ENCODE measurements at regions of chr15 and their contacts with region 1.

Region 1: GRCh38 chr15:77633134-77633912 is 611 bp upstream of the LINGO1 start:
- DNase-seq: peak; percentile 98
- ATAC-seq: peak; percentile 63
- H3K4me3 Mint-ChIP-seq: peak overlapping the region; percentile 63
- H3K27ac Mint-ChIP-seq: peak overlapping the region; percentile 86
- H3K4me1 Mint-ChIP-seq: peaks cover 57% of the 10 kb centered on the region
- H3K27me3 Mint-ChIP-seq: peaks cover 7% of the 10 kb centered on the region
- CTCF ChIP-seq: peak; percentile 92

Region 2: GRCh38 chr15:77107531-77108355 is 525.6 kb before region 1 on chr15:
- CTCF ChIA-PET with region 1: interaction called, 10 read pairs
- POLR2A ChIA-PET with region 1: no interaction called
- DNase-seq: peak; percentile 79
- ATAC-seq: peak; percentile 94
- H3K4me3 Mint-ChIP-seq: no peak overlapping the region
- H3K27ac Mint-ChIP-seq: peak overlapping the region; percentile 95
- H3K4me1 Mint-ChIP-seq: peaks cover 10% of the 10 kb centered on the region
- H3K27me3 Mint-ChIP-seq: no peaks in the 10 kb centered on the region
- CTCF ChIP-seq: peak; percentile 59

Region 3: DNA sequence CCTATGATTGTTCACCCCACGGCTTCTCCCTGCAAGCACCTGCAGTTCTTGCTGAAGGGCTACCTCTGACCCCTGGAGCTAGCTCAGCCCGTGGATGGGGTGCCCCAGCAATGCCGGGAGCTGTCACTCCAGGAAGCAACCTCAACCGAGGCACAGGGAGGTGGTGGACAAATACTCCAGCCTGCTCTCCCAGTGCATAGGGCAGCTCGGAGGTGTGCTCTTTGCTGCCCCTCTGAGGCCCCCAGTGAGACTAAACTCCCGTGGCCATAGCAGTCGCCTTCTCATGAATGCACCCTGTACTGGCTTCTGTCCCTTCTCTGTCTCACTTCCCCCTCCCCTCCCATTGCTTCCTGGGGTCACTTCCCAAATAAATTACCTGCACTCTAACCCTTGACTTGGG is 49.1 kb before region 1 on chr15:
- CTCF ChIA-PET with region 1: interaction called, 22 read pairs
- POLR2A ChIA-PET with region 1: no interaction called
- DNase-seq: peak; percentile 53
- ATAC-seq: peak; percentile 94
- H3K4me3 Mint-ChIP-seq: no peak overlapping the region
- H3K27ac Mint-ChIP-seq: no peak overlapping the region
- H3K4me1 Mint-ChIP-seq: peaks cover 5% of the 10 kb centered on the region; the same call in 1 of the 2 replicates
- H3K27me3 Mint-ChIP-seq: no peaks in the 10 kb centered on the region
- CTCF ChIP-seq: no peak

Region 4: GRCh38 chr15:77659350-77660321 is 26.3 kb after region 1 on chr15:
- CTCF ChIA-PET with region 1: interaction called, 237 read pairs
- POLR2A ChIA-PET with region 1: interaction called, 4 read pairs
- DNase-seq: peak; percentile 77
- ATAC-seq: peak; percentile 46
- H3K4me3 Mint-ChIP-seq: no peak overlapping the region
- H3K27ac Mint-ChIP-seq: no peak overlapping the region
- H3K4me1 Mint-ChIP-seq: peaks cover 29% of the 10 kb centered on the region
- H3K27me3 Mint-ChIP-seq: no peaks in the 10 kb centered on the region; the same call in 1 of the 2 replicates
- CTCF ChIP-seq: no peak

Region 5: GRCh38 chr15:77768107-77768506 is 134.8 kb after region 1 on chr15:
- CTCF ChIA-PET with region 1: interaction called, 15 read pairs
- POLR2A ChIA-PET with region 1: no interaction called
- DNase-seq: peak; percentile 38
- ATAC-seq: peak; percentile 85
- H3K4me3 Mint-ChIP-seq: no peak overlapping the region
- H3K27ac Mint-ChIP-seq: peak overlapping the region; percentile 39; the same call in 1 of the 2 replicates
- H3K4me1 Mint-ChIP-seq: peaks cover 27% of the 10 kb centered on the region
- H3K27me3 Mint-ChIP-seq: no peaks in the 10 kb centered on the region
- CTCF ChIP-seq: no peak

Region 6: DNA sequence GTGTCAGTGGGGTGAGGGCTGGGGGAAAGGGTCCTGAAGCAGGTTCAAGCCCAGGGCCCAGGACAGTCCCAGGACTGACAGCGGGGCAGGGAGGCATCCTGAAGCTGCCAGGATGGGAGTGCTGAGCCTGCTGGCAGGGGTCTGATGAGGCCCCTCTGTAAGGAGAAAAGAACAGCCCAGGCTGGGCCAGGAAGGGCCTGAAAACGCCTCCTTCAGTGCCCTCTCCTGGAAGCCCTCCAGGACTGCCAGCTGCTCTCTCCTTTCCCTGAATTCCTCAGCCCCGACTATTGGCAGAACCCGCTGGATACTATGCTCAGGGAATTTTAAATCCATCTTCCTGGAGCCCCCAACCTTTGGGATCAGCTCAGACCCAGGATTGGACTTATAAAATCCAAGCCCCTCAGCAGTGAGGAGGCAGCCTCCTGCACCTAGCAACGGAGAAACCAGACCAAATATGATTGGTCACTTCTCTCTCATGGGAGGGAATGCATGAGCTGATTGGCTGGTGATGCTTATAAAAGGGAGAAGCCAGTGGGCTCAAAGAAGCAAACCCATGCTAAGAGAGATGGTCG is 202.9 kb after region 1 on chr15:
- CTCF ChIA-PET with region 1: interaction called, 20 read pairs
- POLR2A ChIA-PET with region 1: no interaction called
- DNase-seq: no peak
- ATAC-seq: peak; percentile 84
- H3K4me3 Mint-ChIP-seq: no peak overlapping the region
- H3K27ac Mint-ChIP-seq: no peak overlapping the region
- H3K4me1 Mint-ChIP-seq: peaks cover 16% of the 10 kb centered on the region
- H3K27me3 Mint-ChIP-seq: no peaks in the 10 kb centered on the region; the same call in 1 of the 2 replicates
- CTCF ChIP-seq: no peak

Measured in WTC11 (cell line).